ENCODE measurements at regions of chr2 and their contacts with region 1.

Region 1: GRCh38 chr2:207625018-207625907 is at the start of gene METTL21A:
- DNase-seq: peak; percentile 86
- ATAC-seq: peak; percentile 74
- H3K4me3 ChIP-seq: peak within 1 kb of the TSS; percentile 81
- H3K27ac ChIP-seq: peak within 1 kb of the TSS; percentile 96
- H3K4me1 ChIP-seq: peaks cover 22% of the 10 kb centered on the region
- H3K27me3 ChIP-seq: no peaks in the 10 kb centered on the region
- CTCF ChIP-seq: peak; percentile 50 to 74 (median 73)
- EP300 ChIP-seq: peak; percentile 51 to 58; a peak in 2 of 4 replicates
- POLR2A ChIP-seq: peak; percentile 89
- RAD21 ChIP-seq: peak; percentile 31; the same call in 1 of the 2 replicates
- polyA plus RNA-seq, gene METTL21A: 6.8 to 13.9 TPM

Region 2: GRCh38 chr2:205680067-205680466 is 1945.2 kb before region 1 on chr2:
- CTCF ChIA-PET with region 1: no interaction called
- POLR2A ChIA-PET with region 1: no interaction called
- RAD21 ChIA-PET with region 1: no interaction called
- SMC1A ChIA-PET with region 1: no interaction called
- in situ Hi-C with region 1: no loop called
- intact Hi-C with region 1: no loop called
- DNase-seq: no peak
- ATAC-seq: peak; percentile 81
- H3K4me3 ChIP-seq: no peak overlapping the region
- H3K27ac ChIP-seq: no peak overlapping the region
- H3K4me1 ChIP-seq: peaks cover 11% of the 10 kb centered on the region
- H3K27me3 ChIP-seq: peaks cover 11 to 13% of the 10 kb centered on the region in 2 experiments
- CTCF ChIP-seq: peak; percentile 60 to 78 (median 63)
- EP300 ChIP-seq: no peak
- POLR2A ChIP-seq: no peak
- RAD21 ChIP-seq: peak; percentile 69

Region 3: DNA sequence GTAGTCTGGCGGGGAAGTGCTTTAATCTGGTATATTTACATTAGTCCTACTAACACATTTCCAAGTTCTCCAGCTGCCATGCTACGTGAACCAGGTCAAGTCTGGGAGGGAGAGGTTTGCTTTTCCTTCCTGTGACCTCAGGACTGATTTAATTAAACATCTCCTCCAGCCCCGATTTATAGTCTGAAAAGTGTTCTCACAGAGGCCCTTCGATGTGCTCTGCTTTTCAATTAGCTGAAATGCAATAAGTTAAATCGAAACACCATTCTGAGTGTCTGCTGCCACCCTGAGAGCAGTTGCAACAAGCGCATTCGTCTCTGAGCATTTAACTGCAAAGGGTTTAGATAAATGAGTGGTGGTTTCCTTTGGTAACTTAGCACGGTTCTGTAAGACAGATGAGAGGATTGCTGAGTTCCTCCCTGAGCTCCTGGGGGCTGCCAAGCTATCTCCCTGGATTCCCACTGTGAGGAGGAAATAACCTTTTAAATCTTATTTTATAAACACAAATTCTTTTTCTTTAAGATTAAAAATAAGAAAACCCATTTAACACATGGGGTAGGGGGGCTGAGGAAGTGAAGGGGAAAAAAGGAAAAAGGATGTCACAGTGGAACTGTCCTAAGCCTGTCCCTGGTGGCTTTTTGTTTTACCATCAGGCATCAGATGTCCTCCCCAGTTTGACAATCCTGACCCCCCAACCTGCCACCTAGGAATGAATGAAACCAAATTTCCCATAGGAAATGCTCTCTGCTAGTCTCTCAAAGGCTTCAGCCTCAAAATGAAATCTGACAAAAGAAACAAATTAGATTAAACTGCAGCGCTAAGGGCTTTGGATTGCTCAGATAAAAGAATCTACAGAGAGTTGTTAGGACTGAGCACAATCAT is 152.0 kb before region 1 on chr2:
- CTCF ChIA-PET with region 1: no interaction called
- POLR2A ChIA-PET with region 1: no interaction called
- RAD21 ChIA-PET with region 1: no interaction called
- SMC1A ChIA-PET with region 1: no interaction called
- in situ Hi-C with region 1: no loop called
- intact Hi-C with region 1: no loop called
- DNase-seq: peak; percentile 30
- ATAC-seq: peak; percentile 84
- H3K4me3 ChIP-seq: no peak overlapping the region
- H3K27ac ChIP-seq: no peak overlapping the region
- H3K4me1 ChIP-seq: no peaks in the 10 kb centered on the region
- H3K27me3 ChIP-seq: no peaks in the 10 kb centered on the region
- CTCF ChIP-seq: peak; percentile 49 to 84 (median 67); a peak in 5 of 6 replicates
- EP300 ChIP-seq: no peak
- POLR2A ChIP-seq: no peak
- RAD21 ChIP-seq: peak; percentile 98

Region 4: GRCh38 chr2:207662203-207662602 is 36.9 kb after region 1 on chr2:
- CTCF ChIA-PET with region 1: interaction called, 17 read pairs
- POLR2A ChIA-PET with region 1: interaction called, 10 read pairs
- RAD21 ChIA-PET with region 1: interaction called, 12 read pairs
- SMC1A ChIA-PET with region 1: interaction called, 12 read pairs
- in situ Hi-C with region 1: no loop called
- intact Hi-C with region 1: loop called (anchors 1 kb)
- DNase-seq: peak; percentile 79
- ATAC-seq: peak; percentile 97
- H3K4me3 ChIP-seq: peak overlapping the region; percentile 30; the same call in 1 of the 2 replicates
- H3K27ac ChIP-seq: peak overlapping the region; percentile 61
- H3K4me1 ChIP-seq: peaks cover 10% of the 10 kb centered on the region
- H3K27me3 ChIP-seq: no peaks in the 10 kb centered on the region
- CTCF ChIP-seq: no peak
- EP300 ChIP-seq: peak in 1 of 2 experiments; percentile 8; a peak in 1 of 4 replicates
- POLR2A ChIP-seq: peak; percentile 54
- RAD21 ChIP-seq: no peak

Region 5: DNA sequence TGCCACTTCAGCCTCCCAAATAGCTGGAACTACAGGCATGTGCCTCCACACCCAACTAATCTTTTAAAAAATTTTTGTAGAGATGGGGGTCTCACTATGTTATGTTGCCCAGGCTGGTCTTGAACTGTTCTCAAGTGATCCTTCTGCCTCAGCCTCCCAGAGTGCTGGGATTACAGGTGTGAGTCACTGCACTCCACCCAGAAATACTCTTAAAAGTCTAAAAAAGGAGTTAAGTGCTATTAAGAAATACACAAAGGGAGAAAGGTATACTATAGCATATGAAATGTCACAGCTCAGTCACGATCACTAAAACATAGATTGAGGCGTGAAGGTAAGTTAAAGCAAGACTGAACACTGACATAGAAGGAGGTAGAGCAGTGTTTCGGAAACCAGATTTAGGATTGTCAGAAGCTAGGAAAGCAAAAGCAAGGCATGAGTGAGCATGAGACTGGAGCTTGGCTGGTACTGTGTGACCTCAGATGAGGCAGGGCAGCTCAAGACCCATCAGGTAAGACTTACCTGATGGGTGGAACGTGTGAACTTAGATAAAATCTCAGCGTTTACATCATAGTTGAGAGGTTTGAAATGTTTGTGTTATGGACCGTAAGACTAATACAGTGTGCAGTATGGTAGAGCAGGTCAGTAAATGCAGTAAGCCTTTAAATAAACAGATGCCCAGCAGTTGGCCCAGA is 95.4 kb after region 1 on chr2:
- CTCF ChIA-PET with region 1: interaction called, 49 read pairs
- POLR2A ChIA-PET with region 1: interaction called, 21 read pairs
- RAD21 ChIA-PET with region 1: interaction called, 31 read pairs
- SMC1A ChIA-PET with region 1: interaction called, 23 read pairs
- in situ Hi-C with region 1: no loop called
- intact Hi-C with region 1: loop called (anchors 5 kb)
- DNase-seq: no peak
- ATAC-seq: peak; percentile 4; the same call in 2 of the 3 replicates
- H3K4me3 ChIP-seq: no peak overlapping the region
- H3K27ac ChIP-seq: no peak overlapping the region
- H3K4me1 ChIP-seq: peaks cover 3% of the 10 kb centered on the region; the same call in 1 of the 2 replicates
- H3K27me3 ChIP-seq: no peaks in the 10 kb centered on the region
- CTCF ChIP-seq: no peak
- EP300 ChIP-seq: no peak
- POLR2A ChIP-seq: no peak
- RAD21 ChIP-seq: no peak

Region 6: GRCh38 chr2:207746131-207746530 is 120.9 kb after region 1 on chr2:
- CTCF ChIA-PET with region 1: interaction called, 73 read pairs
- POLR2A ChIA-PET with region 1: interaction called, 5 read pairs
- RAD21 ChIA-PET with region 1: interaction called, 39 read pairs
- SMC1A ChIA-PET with region 1: interaction called, 23 read pairs
- in situ Hi-C with region 1: no loop called
- intact Hi-C with region 1: no loop called
- DNase-seq: no peak
- ATAC-seq: peak; percentile 97
- H3K4me3 ChIP-seq: no peak overlapping the region
- H3K27ac ChIP-seq: no peak overlapping the region
- H3K4me1 ChIP-seq: no peaks in the 10 kb centered on the region
- H3K27me3 ChIP-seq: no peaks in the 10 kb centered on the region
- CTCF ChIP-seq: peak; percentile 91 to 93 (median 91)
- EP300 ChIP-seq: no peak
- POLR2A ChIP-seq: no peak
- RAD21 ChIP-seq: peak; percentile 100

Region 7: GRCh38 chr2:208033758-208034502 is 408.7 kb after region 1 on chr2:
- CTCF ChIA-PET with region 1: interaction called, 10 read pairs
- POLR2A ChIA-PET with region 1: interaction called, 5 read pairs
- RAD21 ChIA-PET with region 1: interaction called, 3 read pairs
- SMC1A ChIA-PET with region 1: interaction called, 5 read pairs
- in situ Hi-C with region 1: loop called (anchors 5 kb)
- intact Hi-C with region 1: loop called (anchors 5 kb)
- DNase-seq: no peak
- ATAC-seq: peak; percentile 92
- H3K4me3 ChIP-seq: no peak overlapping the region
- H3K27ac ChIP-seq: no peak overlapping the region
- H3K4me1 ChIP-seq: peaks cover 8% of the 10 kb centered on the region
- H3K27me3 ChIP-seq: no peaks in the 10 kb centered on the region
- CTCF ChIP-seq: peak; percentile 54 to 74 (median 69); a peak in 5 of 6 replicates
- EP300 ChIP-seq: 0 out of 4 replicates have a peak, but pooled peaks of 1 of the 2 experiments have one; percentile 24
- POLR2A ChIP-seq: no peak
- RAD21 ChIP-seq: peak; percentile 81

Region 8: DNA sequence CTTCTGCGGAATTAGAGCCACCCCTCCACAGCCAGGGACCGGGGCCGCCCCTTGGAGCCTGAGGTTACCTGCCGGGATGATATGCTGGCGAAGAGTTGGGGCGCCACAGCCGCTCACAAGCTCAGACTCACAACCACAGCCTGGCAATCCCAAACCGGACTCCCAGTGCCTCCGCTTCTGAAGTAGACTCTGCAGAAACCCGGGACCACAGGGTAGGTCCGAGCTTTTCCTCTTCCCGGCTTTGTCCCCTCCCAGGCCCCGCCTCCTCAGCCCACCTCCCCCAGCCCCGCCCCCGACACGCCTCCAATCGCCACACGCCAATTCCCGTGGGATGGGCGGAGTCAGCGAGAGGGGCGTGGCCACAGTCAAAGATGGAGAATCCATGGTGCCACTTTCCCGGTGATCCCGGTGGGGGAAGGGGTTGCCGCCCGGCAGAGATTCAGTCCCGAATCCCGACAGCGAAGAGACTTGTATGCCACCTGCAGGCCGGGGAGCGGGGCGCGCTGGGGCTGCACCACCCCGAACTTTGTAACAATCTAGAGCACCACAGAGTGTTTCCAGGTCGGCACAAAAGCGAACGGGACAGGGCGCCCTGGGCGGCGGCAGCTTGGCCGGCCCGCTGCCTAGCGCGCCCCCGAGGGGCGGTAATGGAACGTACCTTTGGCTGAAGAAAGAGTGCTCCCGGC is 629.8 kb after region 1 on chr2 and contains the start of gene IDH1:
- CTCF ChIA-PET with region 1: no interaction called
- POLR2A ChIA-PET with region 1: interaction called, 3 read pairs
- RAD21 ChIA-PET with region 1: no interaction called
- SMC1A ChIA-PET with region 1: interaction called, 3 read pairs
- in situ Hi-C with region 1: loop called (anchors 10 kb)
- intact Hi-C with region 1: no loop called
- DNase-seq: peak; percentile 60
- ATAC-seq: peak; percentile 80
- H3K4me3 ChIP-seq: peak within 1 kb of the TSS; percentile 98
- H3K27ac ChIP-seq: peak within 1 kb of the TSS; percentile 35
- H3K4me1 ChIP-seq: no peaks in the 10 kb centered on the region; the same call in 1 of the 2 replicates
- H3K27me3 ChIP-seq: no peaks in the 10 kb centered on the region
- CTCF ChIP-seq: peak; percentile 37 to 52 (median 44); a peak in 5 of 6 replicates
- EP300 ChIP-seq: no peak
- POLR2A ChIP-seq: peak; percentile 52; the same call in 1 of the 2 replicates
- RAD21 ChIP-seq: no peak
- polyA plus RNA-seq, gene IDH1: 56.0 to 67.7 TPM